Activated CD8-positive, alpha-beta T cell treated with anti-CD3 and anti-CD28 coated beads for 36 hours (primary cell): ENCODE measurements at regions of chr14 and their contacts with region 1.

Region 1: DNA sequence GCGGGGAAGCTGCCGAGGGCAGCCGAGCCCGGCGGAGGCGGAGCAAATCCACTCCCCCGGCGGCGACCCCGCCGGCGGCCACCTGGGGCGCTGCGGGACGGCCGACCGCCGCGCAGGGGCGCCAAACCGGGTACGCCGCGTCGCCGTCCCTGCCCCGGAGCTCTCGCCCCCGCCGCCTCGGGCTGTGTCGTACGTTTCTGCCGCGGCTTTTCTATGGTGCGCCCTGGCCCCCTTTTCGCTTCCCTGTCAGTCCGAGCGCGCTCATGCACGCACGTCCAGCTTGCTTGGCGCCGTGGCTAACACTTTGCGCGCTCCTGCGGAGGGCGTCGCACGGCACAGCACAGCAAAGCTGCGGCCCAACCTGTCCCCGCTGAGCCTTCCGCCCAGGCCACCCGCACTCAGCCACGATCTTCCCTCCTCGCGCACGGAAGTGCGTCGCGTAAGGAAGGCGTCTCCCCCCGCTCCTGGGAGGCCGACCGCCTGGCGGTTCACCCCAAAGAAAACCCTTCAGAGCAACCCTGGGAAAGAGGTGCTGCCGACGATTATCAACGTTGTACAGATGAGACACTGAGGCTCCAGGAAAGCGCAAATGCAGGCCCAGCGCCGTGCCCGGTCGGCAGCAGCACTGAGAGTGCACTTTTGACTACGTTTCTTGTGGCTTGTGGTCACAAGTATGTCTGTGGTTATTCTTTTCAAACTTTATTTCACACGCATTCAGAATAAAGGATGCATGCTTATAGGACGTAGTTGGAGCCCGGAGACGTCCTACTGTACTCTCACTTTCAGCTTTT is at the start of gene HECTD1:
- DNase-seq: peak; percentile 88
- ATAC-seq: peak; percentile 83
- H3K4me3 Mint-ChIP-seq: peak within 1 kb of the TSS; percentile 95
- H3K27ac Mint-ChIP-seq: peak within 1 kb of the TSS; percentile 100
- H3K4me1 Mint-ChIP-seq: peaks cover 40% of the 10 kb centered on the region
- H3K27me3 Mint-ChIP-seq: no peaks in the 10 kb centered on the region
- CTCF ChIP-seq: peak; percentile 85
- total RNA-seq, gene HECTD1: 78.9 to 82.2 TPM

Region 2: DNA sequence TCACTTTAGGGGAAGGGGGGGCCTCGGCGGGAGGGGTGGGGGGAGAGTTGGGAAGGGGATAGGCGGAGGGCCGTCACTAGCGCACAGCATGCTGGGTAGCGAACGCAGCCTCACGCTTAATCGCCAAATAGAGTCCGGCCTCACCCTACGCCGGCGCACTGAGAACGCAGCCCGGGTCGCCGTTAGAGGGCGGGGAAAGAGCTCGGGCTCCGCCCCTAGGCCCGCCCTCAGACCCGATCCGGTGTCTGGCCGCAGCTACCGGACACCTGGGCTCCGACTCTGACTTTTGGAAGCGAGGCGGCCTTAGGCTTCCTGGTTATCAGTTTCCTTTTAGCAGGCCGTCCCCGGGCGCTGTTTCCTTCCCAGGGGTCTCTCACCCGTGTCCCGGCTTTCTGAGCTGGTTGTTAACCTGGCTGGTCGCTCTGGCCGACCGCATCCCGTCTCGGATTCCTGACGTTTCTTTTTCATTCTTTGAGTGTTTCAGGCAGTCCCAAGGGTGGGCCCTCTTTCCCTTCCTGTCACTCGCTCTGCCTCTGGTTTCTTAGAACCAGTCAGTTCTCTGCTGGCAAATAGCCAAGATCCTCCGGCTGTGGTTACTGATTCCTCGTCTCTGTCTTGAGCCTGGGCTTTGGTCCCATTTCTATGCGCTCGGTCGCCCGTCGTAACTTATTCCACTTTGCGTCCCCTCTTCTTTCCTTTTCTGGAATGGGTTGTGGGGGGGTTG is 181.4 kb before region 1 on chr14:
- CTCF ChIA-PET with region 1: no interaction called
- POLR2A ChIA-PET with region 1: interaction called, 16 read pairs
- intact Hi-C with region 1: no loop called
- DNase-seq: peak; percentile 94
- ATAC-seq: peak; percentile 95
- H3K4me3 Mint-ChIP-seq: peak overlapping the region; percentile 80
- H3K27ac Mint-ChIP-seq: peak overlapping the region; percentile 97
- H3K4me1 Mint-ChIP-seq: peaks cover 51% of the 10 kb centered on the region
- H3K27me3 Mint-ChIP-seq: no peaks in the 10 kb centered on the region
- CTCF ChIP-seq: no peak

Region 3: DNA sequence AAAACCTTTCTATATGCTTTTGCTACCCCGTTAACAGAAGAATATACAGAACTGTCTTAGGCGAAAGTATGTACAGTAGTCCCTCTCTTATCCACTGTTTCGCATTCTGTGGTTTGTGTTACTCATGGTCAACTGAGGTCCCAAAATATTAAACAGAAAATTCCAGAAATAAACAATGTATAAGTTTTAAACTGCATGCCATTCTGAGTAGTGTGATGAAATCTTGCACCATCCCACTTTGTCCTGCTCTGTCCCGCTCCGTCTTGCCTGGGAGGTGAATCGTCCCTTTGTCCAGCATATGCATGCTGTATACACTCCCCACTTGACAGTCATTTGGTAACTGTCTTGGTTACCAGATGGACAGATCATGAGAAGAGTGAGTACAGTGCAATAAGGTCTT is 111.7 kb before region 1 on chr14:
- CTCF ChIA-PET with region 1: no interaction called
- POLR2A ChIA-PET with region 1: no interaction called
- intact Hi-C with region 1: no loop called
- DNase-seq: no peak
- ATAC-seq: no peak
- H3K4me3 Mint-ChIP-seq: no peak overlapping the region
- H3K27ac Mint-ChIP-seq: no peak overlapping the region
- H3K4me1 Mint-ChIP-seq: peaks cover 2% of the 10 kb centered on the region
- H3K27me3 Mint-ChIP-seq: no peaks in the 10 kb centered on the region
- CTCF ChIP-seq: no peak

Region 4: DNA sequence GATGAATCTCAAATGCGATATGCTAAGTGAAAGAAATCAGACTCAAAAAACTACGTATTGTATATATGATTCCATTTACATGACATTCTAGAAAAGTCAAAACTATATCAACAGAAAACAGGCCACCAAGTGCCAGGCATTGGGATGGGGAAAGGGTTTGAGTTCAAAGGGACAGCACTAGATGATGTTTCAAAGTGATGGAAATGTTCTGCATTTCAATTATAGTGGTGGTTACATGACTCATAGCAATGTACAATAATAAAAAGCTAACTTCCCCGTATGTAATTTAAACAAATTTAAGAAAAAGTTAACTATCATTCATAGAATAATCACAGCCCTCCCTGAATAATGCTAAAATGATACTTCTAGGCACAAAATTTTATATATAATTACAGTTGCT is 13.9 kb before region 1 on chr14:
- CTCF ChIA-PET with region 1: interaction called, 12 read pairs
- POLR2A ChIA-PET with region 1: interaction called, 36 read pairs
- intact Hi-C with region 1: no loop called
- DNase-seq: no peak
- ATAC-seq: peak; percentile 53
- H3K4me3 Mint-ChIP-seq: no peak overlapping the region
- H3K27ac Mint-ChIP-seq: no peak overlapping the region
- H3K4me1 Mint-ChIP-seq: peaks cover 42% of the 10 kb centered on the region
- H3K27me3 Mint-ChIP-seq: no peaks in the 10 kb centered on the region
- CTCF ChIP-seq: no peak

Region 5: DNA sequence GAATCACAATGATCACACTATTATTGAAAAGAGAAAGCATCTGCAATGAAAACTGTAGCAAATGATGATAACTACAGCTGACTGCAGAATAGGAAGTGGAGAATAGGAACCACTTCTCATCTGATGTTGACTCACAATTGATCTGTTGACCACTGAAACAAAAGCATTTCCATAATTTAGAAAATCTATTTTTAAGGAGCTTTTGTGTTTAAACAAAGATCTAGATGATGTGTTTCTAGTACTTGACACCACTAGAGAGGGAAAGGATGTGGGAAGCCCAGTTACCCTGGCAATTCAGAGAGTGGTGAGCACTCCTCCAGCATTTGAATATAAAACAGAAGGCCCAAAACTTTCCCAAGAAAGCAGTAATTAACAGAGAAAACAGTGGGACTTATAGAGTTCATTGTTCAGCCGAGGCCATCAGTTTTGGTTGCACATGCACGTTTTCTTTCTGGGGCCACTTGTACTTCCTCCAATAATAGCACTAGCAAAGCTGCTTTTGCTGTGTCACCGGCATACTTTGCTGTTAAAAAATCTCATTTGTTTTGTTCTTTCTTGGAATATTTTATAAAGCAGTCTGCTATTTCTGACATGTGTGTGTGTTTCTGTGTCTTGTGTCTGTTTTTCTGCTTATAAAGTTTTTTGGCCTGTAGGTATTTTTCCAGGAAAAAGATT is 75.8 kb after region 1 on chr14:
- CTCF ChIA-PET with region 1: interaction called, 7 read pairs
- POLR2A ChIA-PET with region 1: interaction called, 10 read pairs
- intact Hi-C with region 1: no loop called
- DNase-seq: no peak
- ATAC-seq: no peak
- H3K4me3 Mint-ChIP-seq: no peak overlapping the region
- H3K27ac Mint-ChIP-seq: no peak overlapping the region
- H3K4me1 Mint-ChIP-seq: peaks cover 8% of the 10 kb centered on the region
- H3K27me3 Mint-ChIP-seq: no peaks in the 10 kb centered on the region
- CTCF ChIP-seq: no peak

Region 6: GRCh38 chr14:31357279-31357678 is 149.3 kb after region 1 on chr14:
- CTCF ChIA-PET with region 1: interaction called, 7 read pairs
- POLR2A ChIA-PET with region 1: interaction called, 3 read pairs
- intact Hi-C with region 1: loop called (anchors 10 kb)
- DNase-seq: no peak
- ATAC-seq: no peak
- H3K4me3 Mint-ChIP-seq: no peak overlapping the region
- H3K27ac Mint-ChIP-seq: no peak overlapping the region
- H3K4me1 Mint-ChIP-seq: peaks cover 3% of the 10 kb centered on the region
- H3K27me3 Mint-ChIP-seq: no peaks in the 10 kb centered on the region
- CTCF ChIP-seq: no peak